ENCODE measurements at regions of chr19 and their contacts with region 1.

Region 1: GRCh38 chr19:16542045-16542909 is at the start of gene CHERP:
- DNase-seq: peak; percentile 90 to 99 (median 92)

Region 2: GRCh38 chr19:16429066-16429758 is 113.1 kb before region 1 on chr19:
- intact Hi-C with region 1: no loop called
- DNase-seq: peak; percentile 22 to 94 (median 64)

Region 3: GRCh38 chr19:16457195-16457953 is 84.9 kb before region 1 on chr19:
- intact Hi-C with region 1: no loop called
- DNase-seq: peak in 6 of 10 donors; percentile 38 to 89 (median 63)

Region 4: GRCh38 chr19:16495982-16496612 is 46.2 kb before region 1 on chr19 and contains the starts of genes C19orf44 and CALR3:
- intact Hi-C with region 1: loop called (anchors 5 kb)
- DNase-seq: peak; percentile 97 to 100 (median 99)